Sigmoid colon (tissue), 7 donors: ENCODE measurements at regions of chr13 and their contacts with region 1.

Region 1: GRCh38 chr13:32310134-32310706 is 4.9 kb downstream of the ZAR1L start:
- DNase-seq: no peak
- H3K4me3 ChIP-seq: peak overlapping the region; percentile 2 to 33 (median 24)
- H3K27ac ChIP-seq: peak overlapping the region; percentile 54 to 64 (median 62)
- H3K4me1 ChIP-seq: peaks cover 0 to 15% (median 15%) of the 10 kb centered on the region in 4 donors
- H3K27me3 ChIP-seq: no peaks in the 10 kb centered on the region
- CTCF ChIP-seq: peak; percentile 54 to 71 (median 70)
- EP300 ChIP-seq: no peak
- POLR2A ChIP-seq: no peak

Region 2: GRCh38 chr13:32019612-32020233 is 290.5 kb before region 1 on chr13:
- intact Hi-C with region 1: loop called (anchors 1 kb)
- DNase-seq: no peak
- H3K4me3 ChIP-seq: no peak overlapping the region
- H3K27ac ChIP-seq: no peak overlapping the region
- H3K4me1 ChIP-seq: peaks cover 0 to 18% (median 4%) of the 10 kb centered on the region in 4 donors
- H3K27me3 ChIP-seq: no peaks in the 10 kb centered on the region
- CTCF ChIP-seq: peak; percentile 52 to 76 (median 64)
- EP300 ChIP-seq: no peak
- POLR2A ChIP-seq: no peak

Region 3: DNA sequence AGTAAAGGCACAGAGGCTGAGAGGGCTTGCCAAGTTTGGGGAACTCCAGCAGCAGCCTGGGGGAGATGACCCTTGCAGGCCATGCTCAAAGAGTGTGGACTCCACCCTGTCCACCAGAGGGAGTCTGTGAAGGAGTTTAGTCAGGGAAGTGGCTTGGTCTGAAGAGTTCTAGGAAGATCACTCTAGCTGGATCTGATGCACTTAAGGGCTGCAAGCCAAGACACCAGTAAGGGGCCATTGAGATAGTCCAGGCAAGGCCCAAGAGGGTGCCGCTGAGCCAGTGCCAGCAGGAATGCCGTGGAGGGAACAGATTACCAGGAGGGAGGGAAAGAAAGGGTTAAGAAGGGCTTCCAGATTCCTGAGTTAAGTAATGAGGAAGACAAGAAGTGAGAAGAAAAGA is 63.8 kb before region 1 on chr13:
- intact Hi-C with region 1: loop called (anchors 2 kb)
- DNase-seq: peak; percentile 70
- H3K4me3 ChIP-seq: no peak overlapping the region
- H3K27ac ChIP-seq: peak overlapping the region in 2 of 4 donors; percentile 35 to 36
- H3K4me1 ChIP-seq: peaks cover 0 to 44% (median 14%) of the 10 kb centered on the region in 4 donors
- H3K27me3 ChIP-seq: no peaks in the 10 kb centered on the region
- CTCF ChIP-seq: peak in 3 of 4 experiments; percentile 49 to 67 (median 53)
- EP300 ChIP-seq: no peak
- POLR2A ChIP-seq: no peak